ENCODE measurements at regions of chr20 and their contacts with region 1.

Region 1: DNA sequence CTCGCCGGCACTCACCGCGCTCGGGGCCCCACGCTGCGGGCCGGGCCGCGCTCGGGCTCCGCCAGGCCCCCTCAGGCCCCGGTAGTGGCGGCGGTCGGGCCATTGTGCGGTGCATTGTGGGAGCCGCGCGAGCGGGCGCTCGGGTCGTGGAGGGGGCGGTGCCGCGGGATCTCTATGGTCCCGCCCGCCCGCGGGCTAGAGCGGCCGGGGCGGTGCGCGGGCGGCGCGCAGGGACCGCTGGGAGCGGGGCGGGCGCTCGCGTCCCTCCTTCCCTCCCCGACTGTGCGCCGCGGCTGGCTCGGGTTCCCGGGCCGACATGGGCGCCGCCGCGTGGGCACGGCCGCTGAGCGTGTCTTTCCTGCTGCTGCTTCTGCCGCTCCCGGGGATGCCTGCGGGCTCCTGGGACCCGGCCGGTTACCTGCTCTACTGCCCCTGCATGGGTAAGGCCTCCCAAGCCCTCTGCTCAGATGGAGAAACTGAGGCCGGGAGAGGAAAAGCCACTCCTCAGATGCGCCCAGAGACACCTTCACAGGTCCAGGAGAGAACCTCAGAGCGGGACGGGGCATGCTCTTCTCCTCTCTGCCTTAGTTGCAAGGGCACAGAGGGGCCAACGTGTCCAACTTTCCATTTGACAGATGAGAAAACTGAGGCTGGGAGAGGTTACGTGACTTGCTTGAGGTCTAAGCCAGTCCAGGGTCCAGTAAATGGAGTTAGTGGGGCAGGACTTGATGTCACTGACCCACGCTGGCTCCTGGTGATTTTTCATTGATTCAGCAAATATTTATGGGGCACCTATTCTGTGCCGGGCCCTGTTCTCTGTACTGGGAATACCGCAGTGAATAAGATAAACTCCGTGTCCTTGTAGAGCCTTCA is at the starts of genes PLAGL2 and POFUT1:
- DNase-seq: peak; percentile 74 to 95 (median 87)
- ATAC-seq: peak; percentile 95
- H3K4me3 ChIP-seq: peak within 1 kb of the TSS; percentile 94
- H3K4me3 Mint-ChIP-seq: peak within 1 kb of the TSS; percentile 96
- H3K27ac ChIP-seq: peak within 1 kb of the TSS; percentile 50 to 60
- H3K27ac Mint-ChIP-seq: peak within 1 kb of the TSS; percentile 92
- H3K4me1 ChIP-seq: peaks cover 66% of the 10 kb centered on the region
- H3K4me1 Mint-ChIP-seq: peaks cover 79% of the 10 kb centered on the region
- H3K27me3 ChIP-seq: no peaks in the 10 kb centered on the region
- H3K27me3 Mint-ChIP-seq: no peaks in the 10 kb centered on the region
- CTCF ChIP-seq: no peak
- total RNA-seq, gene PLAGL2: 15.6 to 16.9 TPM
- total RNA-seq, gene POFUT1: 7.5 to 8.8 TPM

Region 2: DNA sequence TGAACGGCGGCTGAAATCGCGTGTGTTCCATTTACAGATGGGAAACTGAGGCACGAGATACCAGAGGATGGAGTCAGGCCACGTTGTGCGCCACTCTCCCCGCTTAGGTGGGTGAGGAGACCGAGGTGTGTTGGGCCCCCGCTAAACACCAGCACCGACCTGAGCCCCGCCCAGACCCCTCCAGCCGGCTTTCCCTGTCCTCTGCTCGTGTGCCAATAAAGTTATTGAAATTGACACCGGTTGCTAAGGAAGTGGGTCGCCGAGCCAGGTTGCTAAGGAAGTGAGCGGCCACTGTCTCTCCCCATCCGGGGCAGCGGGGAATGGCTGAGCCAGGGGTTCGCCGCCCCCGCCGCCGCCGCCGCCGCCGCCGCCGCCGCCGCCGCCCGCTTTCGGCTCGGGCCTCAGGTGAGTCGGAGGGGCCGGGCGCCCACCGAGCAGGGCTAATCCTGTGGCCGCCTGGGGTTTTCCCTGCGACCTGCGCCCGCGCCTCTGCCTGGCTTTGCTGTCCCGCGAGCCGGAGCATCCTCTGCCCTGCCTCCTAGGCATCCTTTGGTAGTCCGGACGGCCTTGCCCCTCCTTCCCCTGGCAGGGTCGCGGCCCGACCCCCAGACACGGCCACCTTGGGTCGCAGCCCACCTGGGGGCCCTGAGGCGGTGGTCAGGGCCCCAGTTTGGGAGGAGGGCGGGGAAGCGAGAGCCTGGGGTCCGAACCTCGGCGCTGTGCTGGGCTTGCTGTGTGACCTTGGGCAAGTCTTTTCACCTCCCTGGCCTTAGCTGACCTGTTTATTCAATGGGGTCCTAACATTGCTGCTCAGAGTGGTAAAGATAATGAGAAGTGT is 69.7 kb after region 1 on chr20 and contains the start of gene KIF3B:
- CTCF ChIA-PET with region 1: no interaction called
- POLR2A ChIA-PET with region 1: no interaction called
- intact Hi-C with region 1: loop called in 1 of 2 experiments (anchors 2 kb)
- DNase-seq: peak; percentile 67 to 94 (median 80)
- ATAC-seq: peak; percentile 88
- H3K4me3 ChIP-seq: peak within 1 kb of the TSS; percentile 95
- H3K4me3 Mint-ChIP-seq: peak within 1 kb of the TSS; percentile 92
- H3K27ac ChIP-seq: peak within 1 kb of the TSS; percentile 76 to 88
- H3K27ac Mint-ChIP-seq: peak within 1 kb of the TSS; percentile 85
- H3K4me1 ChIP-seq: peaks cover 27% of the 10 kb centered on the region
- H3K4me1 Mint-ChIP-seq: peaks cover 46% of the 10 kb centered on the region
- H3K27me3 ChIP-seq: no peaks in the 10 kb centered on the region
- H3K27me3 Mint-ChIP-seq: no peaks in the 10 kb centered on the region
- CTCF ChIP-seq: no peak
- total RNA-seq, gene KIF3B: 7.3 TPM

Region 3: GRCh38 chr20:32819992-32820710 is 612.3 kb after region 1 on chr20:
- CTCF ChIA-PET with region 1: no interaction called
- POLR2A ChIA-PET with region 1: no interaction called
- intact Hi-C with region 1: loop called in 1 of 2 experiments (anchors 10 kb)
- DNase-seq: peak in 13 of 14 experiments; percentile 55 to 93 (median 85)
- ATAC-seq: peak; percentile 72
- H3K4me3 ChIP-seq: peak overlapping the region; percentile 75
- H3K4me3 Mint-ChIP-seq: peak overlapping the region; percentile 99
- H3K27ac ChIP-seq: peak overlapping the region; percentile 77 to 91
- H3K27ac Mint-ChIP-seq: peak overlapping the region; percentile 98
- H3K4me1 ChIP-seq: peaks cover 50% of the 10 kb centered on the region
- H3K4me1 Mint-ChIP-seq: peaks cover 44% of the 10 kb centered on the region
- H3K27me3 ChIP-seq: no peaks in the 10 kb centered on the region
- H3K27me3 Mint-ChIP-seq: no peaks in the 10 kb centered on the region
- CTCF ChIP-seq: no peak